Heart left ventricle (tissue), 16 donors: ENCODE measurements at regions of chr4 and their contacts with region 1.

Region 1: GRCh38 chr4:57102050-57102624 is 8.0 kb downstream of the IGFBP7 start:
- DNase-seq: peak in 4 of 5 donors; percentile 84 to 90 (median 88)
- ATAC-seq: peak; percentile 81 to 93 (median 84)
- H3K4me3 ChIP-seq: peak overlapping the region in 3 of 12 donors; percentile 4 to 29 (median 19)
- H3K27ac ChIP-seq: peak overlapping the region; percentile 65 to 97 (median 86)
- H3K4me1 ChIP-seq: peaks cover 35 to 99% (median 91%) of the 10 kb centered on the region in 12 donors
- H3K27me3 ChIP-seq: no peaks in the 10 kb centered on the region
- CTCF ChIP-seq: no peak
- POLR2A ChIP-seq: no peak

Region 2: GRCh38 chr4:57043347-57044251 is 58.5 kb before region 1 on chr4:
- intact Hi-C with region 1: loop called in 3 of 10 experiments (anchors 2 to 5 kb)
- DNase-seq: peak in 4 of 5 donors; percentile 51 to 70 (median 62)
- ATAC-seq: peak; percentile 67 to 72 (median 70)
- H3K4me3 ChIP-seq: peak overlapping the region in 4 of 12 donors; percentile 3 to 22 (median 11)
- H3K27ac ChIP-seq: peak overlapping the region; percentile 73 to 94 (median 82)
- H3K4me1 ChIP-seq: peaks cover 11 to 86% (median 56%) of the 10 kb centered on the region in 12 donors
- H3K27me3 ChIP-seq: no peaks in the 10 kb centered on the region
- CTCF ChIP-seq: no peak
- POLR2A ChIP-seq: no peak

Region 3: GRCh38 chr4:57055886-57056285 is 46.3 kb before region 1 on chr4:
- intact Hi-C with region 1: loop called in 1 of 10 experiments (anchors 5 kb)
- DNase-seq: peak in 4 of 5 donors; percentile 44 to 65 (median 56)
- ATAC-seq: peak; percentile 45 to 78 (median 58)
- H3K4me3 ChIP-seq: peak overlapping the region in 2 of 12 donors; percentile 12 to 16
- H3K27ac ChIP-seq: peak overlapping the region; percentile 7 to 82 (median 68)
- H3K4me1 ChIP-seq: peaks cover 10 to 94% (median 72%) of the 10 kb centered on the region in 12 donors
- H3K27me3 ChIP-seq: no peaks in the 10 kb centered on the region
- CTCF ChIP-seq: no peak
- POLR2A ChIP-seq: no peak

Region 4: DNA sequence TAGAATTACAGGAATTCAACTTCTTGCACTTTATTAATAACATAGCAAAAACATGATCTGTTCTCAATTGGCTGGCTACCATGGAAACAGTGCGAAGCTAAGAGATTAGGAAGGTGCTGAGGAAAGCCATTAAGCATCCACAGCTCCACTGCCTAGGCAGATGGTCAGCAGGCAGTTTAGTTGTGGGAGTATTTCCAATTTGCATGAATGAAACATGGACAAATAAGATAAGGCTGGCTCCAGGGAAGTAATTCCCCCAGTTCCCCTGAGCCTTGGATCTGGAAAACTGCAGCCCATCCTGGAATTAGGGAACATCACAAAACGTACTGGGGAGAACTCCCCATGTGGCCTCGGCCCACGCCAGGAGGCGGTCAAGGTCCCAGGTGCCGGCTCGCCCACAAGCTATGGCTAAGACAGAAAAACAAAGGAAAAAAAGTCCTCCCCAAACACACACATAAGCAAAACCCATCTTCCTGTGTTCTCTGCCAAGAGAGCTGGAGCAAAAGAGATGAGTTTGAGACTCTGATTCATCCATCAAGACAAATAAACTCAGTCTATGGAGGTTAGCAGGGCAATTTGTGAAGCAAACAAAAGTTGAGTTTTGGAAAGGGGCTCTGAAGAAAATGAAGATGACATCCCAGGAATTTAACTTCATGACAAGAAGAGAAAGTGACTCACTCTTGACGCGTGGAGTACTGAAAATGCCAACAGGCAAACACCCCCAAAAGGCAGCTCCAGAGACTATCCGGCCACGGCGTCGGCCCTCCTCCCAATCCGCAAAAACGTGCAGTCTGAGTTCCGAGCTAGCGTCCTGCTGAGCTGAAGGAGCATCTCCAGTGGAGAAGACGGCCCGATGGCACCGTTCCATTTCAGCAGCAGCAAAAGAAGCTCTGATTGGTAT is 37.1 kb before region 1 on chr4:
- intact Hi-C with region 1: loop called in 3 of 10 experiments (anchors 5 kb)
- DNase-seq: peak; percentile 55 to 81 (median 68)
- ATAC-seq: peak; percentile 64 to 78 (median 74)
- H3K4me3 ChIP-seq: peak overlapping the region in 5 of 12 donors; percentile 4 to 23 (median 10)
- H3K27ac ChIP-seq: peak overlapping the region; percentile 47 to 87 (median 76)
- H3K4me1 ChIP-seq: peaks cover 18 to 98% (median 84%) of the 10 kb centered on the region in 12 donors
- H3K27me3 ChIP-seq: no peaks in the 10 kb centered on the region
- CTCF ChIP-seq: no peak
- POLR2A ChIP-seq: no peak

Region 5: DNA sequence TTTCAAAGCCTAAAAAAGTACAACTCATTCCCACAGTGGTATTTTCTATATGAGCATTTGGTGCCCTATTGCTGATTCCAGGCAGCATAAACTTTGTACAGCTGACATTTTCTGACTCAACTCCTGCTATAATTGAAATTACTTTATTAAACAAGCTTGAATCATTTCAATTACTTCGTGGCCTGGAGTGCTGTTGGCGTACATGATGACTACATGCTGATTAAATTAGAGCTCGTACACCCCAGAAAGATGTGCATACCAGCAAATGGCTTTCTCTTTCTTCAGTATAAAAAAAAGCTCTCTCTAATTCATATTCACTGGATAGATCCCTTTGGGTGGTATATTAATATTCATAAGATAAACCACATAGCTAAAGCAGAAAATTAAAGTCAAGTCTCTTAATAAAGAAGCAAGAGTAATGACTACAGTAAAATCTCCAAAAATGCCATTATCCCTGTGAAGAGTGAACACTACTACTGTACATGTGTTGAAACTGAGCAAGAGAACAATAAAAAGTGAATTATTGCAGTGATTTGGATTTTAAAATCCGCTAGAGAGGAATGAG is 253.0 kb after region 1 on chr4:
- intact Hi-C with region 1: no loop called
- DNase-seq: no peak
- ATAC-seq: no peak
- H3K4me3 ChIP-seq: no peak overlapping the region
- H3K27ac ChIP-seq: no peak overlapping the region
- H3K4me1 ChIP-seq: no peaks in the 10 kb centered on the region
- H3K27me3 ChIP-seq: no peaks in the 10 kb centered on the region
- CTCF ChIP-seq: no peak
- POLR2A ChIP-seq: no peak